ENCODE measurements at regions of chr17 and their contacts with region 1.

Region 1: GRCh38 chr17:51260125-51260880 is at the start of gene UTP18:
- DNase-seq: peak; percentile 99
- H3K4me3 ChIP-seq: peak within 1 kb of the TSS; percentile 97
- H3K27ac ChIP-seq: peak within 1 kb of the TSS; percentile 80
- H3K4me1 ChIP-seq: peaks cover 51% of the 10 kb centered on the region
- CTCF ChIP-seq: no peak
- total RNA-seq, gene UTP18: 58.1 and 62.8 TPM in 2 replicates

Region 2: DNA sequence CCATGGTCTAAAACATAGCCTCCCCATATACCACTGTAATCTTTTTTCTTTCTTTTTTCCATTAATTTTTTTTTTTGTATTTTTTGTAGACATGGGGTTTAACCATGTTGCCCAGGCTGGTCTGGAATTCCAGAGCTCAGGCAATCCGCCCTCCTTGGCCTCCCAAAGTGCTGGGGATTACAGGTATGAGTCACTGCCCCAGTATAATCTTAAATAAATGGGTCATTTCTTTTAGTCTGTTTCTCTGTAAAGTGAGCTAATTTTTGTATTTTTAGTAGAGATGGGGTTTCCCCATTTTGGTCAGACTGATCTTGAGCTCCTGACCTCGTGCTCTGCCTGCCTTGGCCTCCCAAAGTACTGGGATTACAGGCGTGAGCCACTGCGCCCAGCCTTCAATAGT is 112.7 kb before region 1 on chr17:
- CTCF ChIA-PET with region 1: no interaction called
- POLR2A ChIA-PET with region 1: no interaction called
- intact Hi-C with region 1: no loop called
- DNase-seq: no peak
- H3K4me3 ChIP-seq: no peak overlapping the region
- H3K27ac ChIP-seq: no peak overlapping the region
- H3K4me1 ChIP-seq: peaks cover 5% of the 10 kb centered on the region
- CTCF ChIP-seq: no peak

Region 3: DNA sequence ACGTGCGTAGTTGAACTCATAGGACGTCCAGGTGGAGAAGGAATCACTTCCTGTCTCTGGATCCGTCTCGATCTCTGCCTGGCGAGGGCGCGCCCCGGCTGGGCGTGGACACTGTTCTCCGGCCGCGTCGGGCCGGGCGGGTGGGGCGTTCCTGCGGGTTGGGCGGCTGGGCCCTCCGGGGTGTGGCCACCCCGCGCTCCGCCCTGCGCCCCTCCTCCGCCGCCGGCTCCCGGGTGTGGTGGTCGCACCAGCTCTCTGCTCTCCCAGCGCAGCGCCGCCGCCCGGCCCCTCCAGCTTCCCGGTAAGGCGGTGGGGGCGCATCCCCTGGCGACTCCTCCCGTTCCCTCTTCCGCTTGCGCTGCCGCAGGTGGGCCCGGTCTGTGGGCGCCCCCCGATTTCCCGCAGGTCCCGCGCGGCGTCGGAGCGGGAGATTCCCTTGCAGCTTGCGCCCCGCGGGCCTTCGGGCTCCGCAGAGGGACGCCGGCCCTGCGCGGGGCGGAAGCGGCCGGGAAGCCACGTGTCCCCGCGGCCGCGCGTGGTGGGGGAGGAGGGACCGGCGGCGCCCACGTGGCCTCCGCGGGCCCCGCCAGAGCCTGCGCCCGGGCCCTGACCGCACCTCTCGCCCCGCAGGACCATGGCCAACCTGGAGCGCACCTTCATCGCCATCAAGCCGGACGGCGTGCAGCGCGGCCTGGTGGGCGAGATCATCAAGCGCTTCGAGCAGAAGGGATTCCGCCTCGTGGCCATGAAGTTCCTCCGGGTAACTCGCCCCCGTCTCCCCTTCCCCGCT is 93.9 kb before region 1 on chr17 and contains the start of gene NME2:
- CTCF ChIA-PET with region 1: no interaction called
- POLR2A ChIA-PET with region 1: no interaction called
- intact Hi-C with region 1: loop called (anchors 2 kb)
- DNase-seq: peak; percentile 86
- H3K4me3 ChIP-seq: peak within 1 kb of the TSS; percentile 83
- H3K27ac ChIP-seq: peak within 1 kb of the TSS; percentile 71
- H3K4me1 ChIP-seq: peaks cover 22% of the 10 kb centered on the region
- CTCF ChIP-seq: no peak
- total RNA-seq, gene NME2: 369 and 397 TPM in 2 replicates

Region 4: DNA sequence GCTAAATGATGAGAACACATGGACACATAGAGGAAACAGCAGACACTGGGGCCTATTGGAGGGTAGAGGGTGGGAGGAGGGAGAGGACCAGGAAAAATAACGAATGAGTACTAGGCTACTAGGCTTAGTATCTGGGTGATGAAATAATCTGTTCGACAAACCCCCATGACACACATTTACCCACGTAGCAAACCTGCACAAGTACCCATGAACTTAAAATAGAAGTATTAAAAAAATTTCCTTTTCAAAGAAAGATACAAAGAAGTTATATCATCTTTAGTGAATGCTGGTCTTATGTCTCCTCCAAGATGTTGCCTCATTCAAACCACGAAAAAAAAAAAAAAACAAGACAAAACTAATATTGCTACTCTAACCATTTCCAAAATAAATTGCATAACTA is 32.1 kb before region 1 on chr17:
- CTCF ChIA-PET with region 1: no interaction called
- POLR2A ChIA-PET with region 1: interaction called, 24 read pairs
- intact Hi-C with region 1: loop called (anchors 1 kb)
- DNase-seq: no peak
- H3K4me3 ChIP-seq: peak overlapping the region; percentile 13
- H3K27ac ChIP-seq: peak overlapping the region; percentile 88
- H3K4me1 ChIP-seq: peaks cover 89% of the 10 kb centered on the region
- CTCF ChIP-seq: no peak

Region 5: GRCh38 chr17:51238255-51238887 is 21.9 kb before region 1 on chr17:
- CTCF ChIA-PET with region 1: no interaction called
- POLR2A ChIA-PET with region 1: interaction called, 9 read pairs
- intact Hi-C with region 1: loop called (anchors 1 kb)
- DNase-seq: peak; percentile 78
- H3K4me3 ChIP-seq: peak overlapping the region; percentile 58
- H3K27ac ChIP-seq: peak overlapping the region; percentile 84
- H3K4me1 ChIP-seq: peaks cover 56% of the 10 kb centered on the region
- CTCF ChIP-seq: no peak